HEK293T (cell line): ENCODE measurements at regions of chr19 and their contacts with region 1.

Region 1: DNA sequence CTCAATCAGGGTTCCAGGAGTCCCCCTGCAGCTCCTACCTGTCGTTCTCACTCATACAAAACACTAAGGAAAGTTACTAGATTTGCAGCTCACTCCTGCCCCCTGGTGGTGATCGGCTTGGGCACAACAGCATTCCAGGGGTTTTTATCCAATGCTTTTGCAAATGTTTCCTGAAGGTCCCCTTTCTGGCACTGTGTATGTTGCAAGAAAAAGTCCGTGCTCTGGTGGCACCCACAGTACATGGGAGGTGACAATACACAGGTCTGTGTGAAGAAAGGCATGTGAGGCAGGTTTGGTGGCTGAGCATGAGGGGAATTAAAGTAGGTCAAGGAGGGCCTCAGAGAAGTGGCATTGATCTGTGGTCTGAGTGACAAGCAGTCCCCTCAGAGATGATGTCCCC is 8.6 kb upstream of the TYK2 start:
- DNase-seq: peak; percentile 70

Region 2: DNA sequence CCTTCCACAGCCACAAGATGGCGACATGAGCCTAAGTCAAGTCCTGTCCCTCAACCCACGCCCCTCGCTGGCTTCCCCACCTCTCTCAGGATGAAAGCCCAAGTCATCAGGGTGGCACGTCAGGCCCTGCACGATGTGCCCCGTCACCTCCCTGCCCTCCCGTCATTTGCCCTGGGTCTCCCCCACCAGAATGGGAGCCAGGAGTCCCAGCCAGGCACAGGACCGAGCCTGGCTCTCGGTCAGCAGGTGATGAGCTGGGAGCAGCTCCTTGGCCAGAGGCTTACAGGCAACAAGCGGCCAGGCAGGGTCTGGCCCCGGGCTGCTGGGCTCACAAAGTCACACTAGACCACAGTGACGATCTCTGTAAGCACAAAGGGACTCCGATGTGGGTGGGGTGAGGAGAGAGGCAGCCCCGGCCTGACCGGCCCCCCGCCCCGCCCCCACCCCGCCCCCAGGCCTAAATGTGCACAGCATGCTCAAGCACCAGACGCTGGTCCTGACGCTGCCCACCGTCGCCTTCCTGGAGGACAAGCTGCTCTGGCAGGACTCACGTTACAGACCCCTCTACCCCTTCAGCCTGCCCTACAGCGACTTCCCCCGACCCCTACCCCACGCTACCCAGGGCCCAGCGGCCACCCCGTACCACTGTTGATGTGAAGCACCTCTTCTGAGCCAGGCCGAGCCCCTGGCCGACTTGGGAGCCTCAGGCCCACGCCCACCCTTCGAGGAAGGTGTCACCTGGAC is 129.6 kb before region 1 on chr19:
- CTCF ChIA-PET with region 1: interaction called, 48 read pairs
- POLR2A ChIA-PET with region 1: interaction called, 3 read pairs
- DNase-seq: peak; percentile 83

Region 3: DNA sequence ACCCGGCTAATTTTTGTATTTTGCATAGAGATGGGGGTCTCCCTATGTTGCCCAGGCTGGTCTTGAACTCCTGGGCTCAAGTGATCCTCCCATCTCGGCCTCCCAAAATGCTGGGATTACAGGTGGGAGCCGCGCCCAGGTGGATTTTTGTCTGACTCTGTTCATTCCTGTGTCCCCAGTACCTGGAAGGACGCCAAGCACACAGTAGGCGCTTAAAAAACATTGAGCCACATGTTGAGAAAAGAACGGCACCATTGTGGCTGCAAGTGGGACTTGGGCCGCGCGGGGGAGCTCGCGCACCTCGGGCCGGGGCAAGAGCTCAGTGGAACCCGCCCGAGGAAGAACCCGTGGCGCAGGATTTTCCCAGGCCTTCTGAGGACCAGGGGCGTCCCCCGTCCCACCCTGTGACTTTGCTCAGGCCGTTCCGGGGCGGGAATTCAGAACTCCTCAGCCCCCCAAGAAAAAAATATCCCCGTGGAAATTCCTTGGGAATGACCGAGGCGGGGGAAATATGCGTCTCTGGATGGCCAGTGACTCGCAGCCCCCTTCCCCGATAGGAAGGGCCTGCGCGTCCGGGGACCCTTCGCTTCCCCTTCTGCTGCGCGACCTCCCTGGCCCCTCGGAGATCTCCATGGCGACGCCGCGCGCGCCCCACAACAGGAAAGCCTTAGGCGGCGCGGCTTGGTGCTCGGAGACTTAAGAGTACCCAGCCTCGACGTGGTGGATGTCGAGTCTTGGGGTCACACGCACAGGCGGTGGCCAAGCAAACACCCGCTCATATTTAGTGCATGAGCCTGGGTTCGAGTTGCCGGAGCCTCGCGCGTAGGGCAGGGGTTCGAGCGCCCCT is 119.4 kb before region 1 on chr19:
- CTCF ChIA-PET with region 1: interaction called, 45 read pairs
- POLR2A ChIA-PET with region 1: interaction called, 10 read pairs
- DNase-seq: peak; percentile 86

Region 4: DNA sequence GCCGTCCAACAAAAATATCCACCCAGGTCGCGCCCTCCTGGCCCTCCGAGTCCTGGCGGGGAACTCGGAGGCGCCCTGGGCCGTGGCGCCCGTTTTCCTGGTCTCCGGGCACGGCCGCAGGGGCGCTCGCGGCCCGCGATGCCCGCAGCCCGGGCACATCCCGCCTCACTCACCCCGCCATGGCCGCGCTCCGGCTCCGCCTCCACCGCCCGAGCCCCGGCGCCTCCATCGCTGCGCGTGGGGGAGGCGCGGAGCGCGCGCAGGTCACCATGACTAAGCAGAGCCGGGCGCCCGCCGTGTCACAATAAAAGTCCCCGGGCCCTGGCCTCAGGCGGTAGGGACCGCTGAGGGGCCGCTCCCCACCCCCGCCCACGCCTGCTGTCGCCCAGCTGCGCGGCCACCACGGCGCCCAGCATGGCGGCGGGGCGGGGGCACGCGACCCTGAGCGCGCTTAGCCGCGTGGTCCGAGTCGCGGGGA is 113.6 kb after region 1 on chr19:
- CTCF ChIA-PET with region 1: no interaction called
- POLR2A ChIA-PET with region 1: no interaction called
- DNase-seq: peak; percentile 93